ENCODE measurements at regions of chr5 and their contacts with region 1.

Region 1: DNA sequence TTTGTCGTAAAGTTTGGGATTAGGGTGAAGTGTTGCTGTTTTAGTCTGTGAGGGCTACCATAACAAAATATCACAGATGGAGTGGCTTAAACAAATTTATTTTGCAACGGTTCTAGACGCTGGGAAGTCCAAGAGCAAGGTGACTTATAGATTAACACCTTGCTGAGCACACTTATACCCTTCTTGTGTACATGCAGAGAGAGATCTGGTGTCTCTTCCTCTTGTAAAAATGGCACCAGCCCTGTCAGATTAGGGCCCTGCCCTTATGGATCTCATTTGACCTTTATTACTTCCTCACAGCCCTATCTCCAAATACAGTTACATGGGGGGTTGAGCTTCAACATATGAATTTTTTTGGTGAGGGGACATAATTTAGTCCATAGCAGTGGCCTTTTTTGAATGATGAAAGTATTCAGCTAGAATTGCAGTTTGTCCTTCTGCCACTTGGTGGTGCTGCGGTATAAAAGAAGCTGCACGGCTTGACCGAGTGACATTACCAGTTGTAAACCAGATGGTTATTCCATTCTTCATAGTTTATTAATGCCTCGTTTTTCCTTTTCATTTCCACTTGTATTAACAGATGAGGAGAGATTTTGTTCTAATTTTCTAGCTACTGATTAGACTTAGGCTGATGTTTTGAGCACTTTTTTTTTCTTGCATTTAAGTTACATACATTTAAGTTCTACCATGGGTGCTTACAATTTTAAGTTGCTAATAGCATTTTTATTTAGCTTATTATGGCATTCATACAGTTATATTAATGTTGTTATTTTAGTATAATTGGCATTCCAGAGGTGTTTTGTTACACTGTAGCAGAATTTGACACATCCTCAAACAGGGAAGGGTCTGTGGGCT is 19.4 kb downstream of the DCP2 start:
- DNase-seq: no peak
- ATAC-seq: peak; percentile 95
- H3K4me3 ChIP-seq: no peak overlapping the region
- H3K27ac ChIP-seq: no peak overlapping the region
- H3K4me1 ChIP-seq: no peaks in the 10 kb centered on the region
- H3K27me3 ChIP-seq: no peaks in the 10 kb centered on the region
- CTCF ChIP-seq: peak; percentile 79 to 93 (median 90)
- EP300 ChIP-seq: no peak
- POLR2A ChIP-seq: no peak
- RAD21 ChIP-seq: peak; percentile 88

Region 2: DNA sequence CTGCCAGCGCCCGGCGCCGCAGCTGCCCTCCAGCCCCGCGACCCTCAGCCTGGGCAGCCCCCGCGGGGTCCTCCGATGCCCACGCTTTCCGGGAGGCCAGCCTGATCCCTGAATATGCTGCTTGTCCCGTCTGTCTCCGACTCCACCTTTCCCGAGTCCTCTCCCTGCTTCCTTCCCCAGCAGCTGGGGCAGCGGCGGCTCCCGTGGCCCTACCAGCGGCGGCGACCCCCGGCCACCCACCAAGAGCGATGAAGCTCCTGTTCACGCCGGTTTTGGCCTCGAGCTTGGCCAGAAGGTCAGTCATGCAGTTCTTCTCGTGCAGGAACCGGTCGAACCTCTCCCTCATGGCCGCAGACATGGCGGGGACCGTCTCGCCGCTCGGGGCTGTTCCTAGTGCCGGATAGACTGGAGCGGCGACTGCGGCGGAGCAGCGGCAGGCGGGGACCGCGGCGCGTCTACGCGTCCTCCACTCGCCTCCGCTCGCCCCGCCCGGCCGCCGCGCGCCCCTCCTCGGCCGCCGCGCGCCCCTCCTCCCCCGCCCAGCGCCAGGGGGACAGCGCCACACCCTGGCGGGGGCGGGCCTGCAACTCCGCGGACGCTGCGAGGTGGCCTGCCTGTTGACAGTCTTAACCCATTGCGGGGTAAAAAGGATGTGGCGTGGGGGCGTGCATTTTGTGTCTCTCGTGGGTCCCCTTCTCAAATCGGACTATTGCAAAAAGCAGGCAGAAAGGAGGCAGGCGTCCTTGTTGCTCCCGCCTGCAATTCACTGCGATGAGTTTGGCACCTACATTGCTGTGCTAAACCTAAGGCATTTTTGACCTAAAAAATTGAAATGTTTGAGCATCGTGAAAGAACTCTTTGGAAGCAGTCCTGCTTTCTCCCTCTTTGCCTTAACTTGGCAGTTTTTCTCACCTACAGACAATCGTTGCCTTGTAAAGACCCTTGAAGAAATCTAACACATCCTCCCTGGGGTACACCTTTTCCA is 73.9 kb before region 1 on chr5 and contains the start of gene REEP5:
- CTCF ChIA-PET with region 1: interaction called, 12 read pairs
- POLR2A ChIA-PET with region 1: no interaction called
- RAD21 ChIA-PET with region 1: interaction called, 5 read pairs
- SMC1A ChIA-PET with region 1: interaction called, 4 read pairs
- in situ Hi-C with region 1: no loop called
- intact Hi-C with region 1: no loop called
- DNase-seq: no peak
- ATAC-seq: peak; percentile 79
- H3K4me3 ChIP-seq: peak within 1 kb of the TSS; percentile 81
- H3K27ac ChIP-seq: peak within 1 kb of the TSS; percentile 84
- H3K4me1 ChIP-seq: peaks cover 51% of the 10 kb centered on the region
- H3K27me3 ChIP-seq: no peaks in the 10 kb centered on the region
- CTCF ChIP-seq: peak; percentile 77 to 88 (median 79)
- EP300 ChIP-seq: no peak
- POLR2A ChIP-seq: peak; percentile 98
- RAD21 ChIP-seq: peak; percentile 79
- polyA plus RNA-seq, gene REEP5: 196 to 211 TPM

Region 3: GRCh38 chr5:112968411-112969106 is 27.4 kb before region 1 on chr5:
- CTCF ChIA-PET with region 1: interaction called, 12 read pairs
- POLR2A ChIA-PET with region 1: no interaction called
- RAD21 ChIA-PET with region 1: interaction called, 6 read pairs
- SMC1A ChIA-PET with region 1: interaction called, 11 read pairs
- in situ Hi-C with region 1: no loop called
- intact Hi-C with region 1: no loop called
- DNase-seq: no peak
- ATAC-seq: no peak
- H3K4me3 ChIP-seq: no peak overlapping the region
- H3K27ac ChIP-seq: no peak overlapping the region
- H3K4me1 ChIP-seq: peaks cover 32% of the 10 kb centered on the region
- H3K27me3 ChIP-seq: no peaks in the 10 kb centered on the region
- CTCF ChIP-seq: no peak
- EP300 ChIP-seq: no peak
- POLR2A ChIP-seq: no peak
- RAD21 ChIP-seq: no peak

Region 4: GRCh38 chr5:112983363-112983762 is 12.6 kb before region 1 on chr5:
- CTCF ChIA-PET with region 1: interaction called, 79 read pairs
- POLR2A ChIA-PET with region 1: interaction called, 6 read pairs
- RAD21 ChIA-PET with region 1: interaction called, 19 read pairs
- SMC1A ChIA-PET with region 1: interaction called, 30 read pairs
- in situ Hi-C with region 1: no loop called
- intact Hi-C with region 1: no loop called
- DNase-seq: no peak
- ATAC-seq: no peak
- H3K4me3 ChIP-seq: no peak overlapping the region
- H3K27ac ChIP-seq: no peak overlapping the region
- H3K4me1 ChIP-seq: no peaks in the 10 kb centered on the region
- H3K27me3 ChIP-seq: no peaks in the 10 kb centered on the region
- CTCF ChIP-seq: no peak
- EP300 ChIP-seq: no peak
- POLR2A ChIP-seq: no peak
- RAD21 ChIP-seq: no peak

Region 5: DNA sequence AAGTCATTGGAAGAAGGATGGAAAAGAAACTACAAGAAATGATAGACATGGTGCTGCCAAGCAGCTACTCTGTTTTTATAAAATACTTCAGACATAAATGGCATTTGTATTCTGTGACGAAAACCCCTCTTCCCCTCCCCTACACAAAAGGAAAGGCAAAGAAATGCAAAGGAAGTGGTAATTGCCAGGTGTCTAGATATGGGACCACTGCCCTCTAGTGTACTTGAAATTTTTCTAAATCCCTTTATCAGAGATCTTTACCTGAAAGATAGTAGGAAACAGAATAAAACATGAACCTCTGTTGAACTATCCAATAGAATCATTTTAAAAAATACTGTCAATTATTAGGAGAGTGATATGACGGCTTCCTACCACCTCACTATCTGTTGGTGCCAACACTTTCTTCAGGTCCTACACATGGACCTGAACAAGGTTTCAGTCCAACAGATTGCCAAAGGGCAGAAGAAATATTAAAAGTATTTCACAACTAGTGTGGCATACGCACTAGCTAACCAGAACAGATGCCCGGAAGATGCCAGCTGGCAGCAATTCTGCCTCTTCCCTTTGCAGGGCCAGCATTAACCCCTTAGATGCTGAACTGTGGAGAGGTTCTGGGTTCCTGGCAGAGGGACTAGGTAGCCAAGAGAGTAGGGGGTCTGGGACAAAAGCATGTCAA is 334.7 kb after region 1 on chr5:
- CTCF ChIA-PET with region 1: interaction called, 5 read pairs
- POLR2A ChIA-PET with region 1: no interaction called
- RAD21 ChIA-PET with region 1: interaction called, 3 read pairs
- SMC1A ChIA-PET with region 1: interaction called, 3 read pairs
- in situ Hi-C with region 1: no loop called
- intact Hi-C with region 1: loop called (anchors 2 kb)
- DNase-seq: no peak
- ATAC-seq: peak; percentile 52; the same call in 2 of the 3 replicates
- H3K4me3 ChIP-seq: no peak overlapping the region
- H3K27ac ChIP-seq: no peak overlapping the region
- H3K4me1 ChIP-seq: no peaks in the 10 kb centered on the region
- H3K27me3 ChIP-seq: no peaks in the 10 kb centered on the region
- CTCF ChIP-seq: peak; percentile 27 to 44 (median 34); a peak in 4 of 6 replicates
- EP300 ChIP-seq: no peak
- POLR2A ChIP-seq: no peak
- RAD21 ChIP-seq: peak; percentile 70

Region 6: GRCh38 chr5:113513384-113514288 is 517.6 kb after region 1 on chr5 and contains the start of gene YTHDC2:
- CTCF ChIA-PET with region 1: interaction called, 34 read pairs
- POLR2A ChIA-PET with region 1: no interaction called
- RAD21 ChIA-PET with region 1: interaction called, 13 read pairs
- SMC1A ChIA-PET with region 1: interaction called, 13 read pairs
- in situ Hi-C with region 1: no loop called
- intact Hi-C with region 1: loop called (anchors 2 kb)
- DNase-seq: peak; percentile 42
- ATAC-seq: peak; percentile 91
- H3K4me3 ChIP-seq: peak within 1 kb of the TSS; percentile 74
- H3K27ac ChIP-seq: peak within 1 kb of the TSS; percentile 81
- H3K4me1 ChIP-seq: peaks cover 3% of the 10 kb centered on the region
- H3K27me3 ChIP-seq: no peaks in the 10 kb centered on the region
- CTCF ChIP-seq: peak in 2 of 3 experiments; percentile 14 to 25; a peak in 3 of 6 replicates
- EP300 ChIP-seq: no peak
- POLR2A ChIP-seq: peak; percentile 98
- RAD21 ChIP-seq: peak; percentile 35; the same call in 1 of the 2 replicates
- polyA plus RNA-seq, gene YTHDC2: 3.8 to 5.7 TPM

Region 7: DNA sequence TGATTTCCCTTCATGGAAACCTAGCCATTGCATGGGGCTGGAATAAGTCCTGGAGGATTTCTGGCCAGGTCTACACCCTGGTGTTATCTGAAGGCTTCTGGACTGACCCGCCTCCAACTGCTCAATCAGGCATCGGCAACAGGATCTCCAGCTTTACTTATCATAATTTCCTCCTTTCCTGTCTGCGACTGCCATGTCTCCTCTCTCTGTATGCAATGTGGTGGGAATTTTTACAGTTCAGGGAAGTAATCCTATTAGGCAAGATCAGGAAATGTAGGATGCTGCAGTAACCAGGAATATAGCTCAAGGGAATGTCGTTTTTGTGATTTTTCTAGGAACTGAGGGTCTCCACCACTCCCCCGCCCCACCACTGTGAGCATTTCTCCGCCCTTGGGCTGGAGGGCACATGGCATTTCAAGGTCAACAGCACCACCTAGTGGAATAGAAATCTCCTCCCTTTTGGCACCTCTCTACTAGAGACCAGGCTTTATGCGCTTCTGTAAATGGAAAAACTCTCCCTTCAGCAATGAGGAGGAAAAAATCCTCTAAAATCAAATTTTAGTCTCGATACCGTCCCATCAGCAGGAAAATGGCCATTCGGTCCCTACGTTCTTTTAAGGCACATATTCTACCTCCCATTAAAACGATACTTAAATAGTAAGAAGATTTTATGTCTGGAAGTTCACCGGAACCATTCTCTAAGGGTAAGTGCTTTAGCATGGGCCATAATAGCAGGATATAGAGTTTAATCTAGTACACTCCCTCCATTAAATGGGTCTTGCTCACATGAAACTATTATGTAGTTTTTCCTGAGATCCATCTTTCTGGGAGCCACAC is 610.5 kb after region 1 on chr5:
- CTCF ChIA-PET with region 1: interaction called, 22 read pairs
- POLR2A ChIA-PET with region 1: no interaction called
- RAD21 ChIA-PET with region 1: interaction called, 17 read pairs
- SMC1A ChIA-PET with region 1: interaction called, 11 read pairs
- in situ Hi-C with region 1: no loop called
- intact Hi-C with region 1: loop called (anchors 1 kb)
- DNase-seq: peak; percentile 7
- ATAC-seq: peak; percentile 98
- H3K4me3 ChIP-seq: no peak overlapping the region
- H3K27ac ChIP-seq: no peak overlapping the region
- H3K4me1 ChIP-seq: no peaks in the 10 kb centered on the region
- H3K27me3 ChIP-seq: no peaks in the 10 kb centered on the region
- CTCF ChIP-seq: peak; percentile 63 to 82 (median 73)
- EP300 ChIP-seq: no peak
- POLR2A ChIP-seq: no peak
- RAD21 ChIP-seq: peak; percentile 96